HCT116 (cell line): ENCODE measurements at regions of chr18 and their contacts with region 1.

Region 1: DNA sequence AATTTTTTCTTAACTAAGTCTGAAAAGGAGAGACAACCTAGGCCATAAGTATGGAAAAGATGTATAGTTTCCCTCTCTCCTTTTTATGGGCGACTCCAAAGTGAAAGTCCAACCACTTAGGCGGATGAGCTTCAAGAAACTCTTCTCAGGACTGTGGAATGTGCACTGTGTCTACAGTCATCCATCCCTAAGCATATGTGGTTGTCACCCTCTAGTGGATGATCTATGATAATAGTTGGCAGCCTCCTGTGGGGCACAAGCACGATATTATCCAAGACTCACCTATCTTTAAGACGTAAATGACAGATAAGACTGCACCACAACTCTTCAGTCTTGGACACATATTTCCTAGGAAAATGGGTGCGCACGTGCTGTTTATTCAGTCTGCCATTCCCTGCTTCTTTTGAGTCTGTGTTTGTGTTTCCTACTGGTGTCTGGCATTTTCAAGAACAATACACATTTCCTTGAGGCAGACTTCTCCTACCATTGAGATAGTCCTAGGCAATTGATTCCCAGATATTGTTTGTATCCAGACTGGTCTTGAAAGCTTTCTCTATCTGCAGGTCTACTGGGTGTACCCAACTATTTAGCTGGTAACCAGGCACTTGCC is 145.5 kb upstream of the CTAGE1 start:
- DNase-seq: peak; percentile 74
- ATAC-seq: peak; percentile 81
- H3K4me3 ChIP-seq: peak overlapping the region; percentile 1 to 4; a peak in 3 of 4 replicates
- H3K27ac ChIP-seq: no peak overlapping the region
- H3K4me1 ChIP-seq: peaks cover 4 to 22% of the 10 kb centered on the region in 2 experiments; a peak in 3 of 4 replicates
- H3K27me3 ChIP-seq: no peaks in the 10 kb centered on the region
- CTCF ChIP-seq: peak; percentile 76 to 82 (median 81)
- POLR2A ChIP-seq: no peak
- RAD21 ChIP-seq: peak; percentile 97

Region 2: DNA sequence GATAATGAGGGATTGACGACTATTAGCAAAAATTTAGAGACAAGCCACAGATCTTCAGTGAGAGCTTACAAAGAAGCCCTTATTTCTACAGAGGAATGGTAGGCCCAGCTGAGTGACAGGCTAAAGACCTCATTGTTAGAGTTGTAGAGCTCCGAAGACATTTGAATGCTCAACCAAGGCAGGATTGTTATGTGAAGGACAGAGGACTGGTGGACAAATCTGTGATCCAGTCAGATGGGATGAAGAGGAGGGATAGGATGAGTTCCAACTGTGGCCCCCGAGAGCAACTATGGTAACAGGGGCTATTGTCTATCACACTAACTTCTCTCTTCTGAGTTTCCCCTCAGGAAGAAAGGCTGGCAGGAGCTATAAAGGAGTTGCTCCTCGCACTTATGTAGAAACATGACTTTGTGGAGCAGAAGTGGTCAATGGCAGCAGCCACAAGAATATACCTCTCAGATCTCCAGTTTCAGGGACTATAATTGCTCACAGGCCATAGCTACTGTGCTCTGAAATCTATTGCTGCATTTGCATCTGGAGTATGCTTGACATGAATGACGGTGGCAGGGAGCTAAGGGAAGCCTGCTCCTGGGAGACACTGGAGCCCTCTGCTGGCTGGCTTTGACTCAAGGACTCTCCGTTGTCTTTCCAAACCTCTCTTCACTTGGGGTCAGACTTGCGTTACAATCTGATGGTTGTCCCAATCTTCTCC is 1371.5 kb before region 1 on chr18:
- CTCF ChIA-PET with region 1: no interaction called
- POLR2A ChIA-PET with region 1: no interaction called
- RAD21 ChIA-PET with region 1: no interaction called
- intact Hi-C with region 1: loop called (anchors 10 kb)
- DNase-seq: peak; percentile 57
- ATAC-seq: peak; percentile 92
- H3K4me3 ChIP-seq: no peak overlapping the region
- H3K27ac ChIP-seq: no peak overlapping the region
- H3K4me1 ChIP-seq: peaks cover 0 to 16% of the 10 kb centered on the region in 2 experiments; a peak in 2 of 4 replicates
- H3K27me3 ChIP-seq: no peaks in the 10 kb centered on the region
- CTCF ChIP-seq: peak; percentile 72 to 91 (median 77)
- POLR2A ChIP-seq: no peak
- RAD21 ChIP-seq: peak; percentile 71

Region 3: DNA sequence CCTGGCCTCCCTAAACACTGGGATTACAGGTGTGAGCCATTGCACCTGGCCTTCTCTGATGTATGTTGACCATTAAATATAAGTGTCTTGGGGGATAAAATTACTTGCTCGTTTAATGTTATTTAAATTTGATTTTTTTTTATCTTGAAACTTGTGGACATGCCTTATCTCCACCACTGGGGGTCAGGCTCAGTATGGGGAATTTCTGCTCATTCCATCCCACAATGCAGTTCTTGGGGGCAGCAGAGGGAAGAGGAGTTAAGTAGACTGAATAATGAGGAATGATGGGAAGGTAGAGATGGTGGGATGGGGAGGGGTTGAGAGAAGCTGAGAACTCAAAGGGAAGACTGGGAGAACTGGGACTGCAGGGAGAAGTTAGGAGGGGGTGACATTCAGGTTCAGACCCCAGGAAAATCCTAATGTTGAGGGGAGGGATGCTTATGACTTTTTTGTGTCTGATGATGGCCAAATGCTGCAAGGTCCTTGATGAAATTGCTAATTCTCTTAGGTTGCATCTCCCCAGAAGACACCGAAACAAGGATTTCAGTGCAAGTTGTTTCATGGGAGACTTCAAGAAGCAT is 648.4 kb before region 1 on chr18:
- CTCF ChIA-PET with region 1: no interaction called
- POLR2A ChIA-PET with region 1: no interaction called
- RAD21 ChIA-PET with region 1: no interaction called
- intact Hi-C with region 1: loop called (anchors 1 kb)
- DNase-seq: peak; percentile 59
- ATAC-seq: peak; percentile 95
- H3K4me3 ChIP-seq: no peak overlapping the region
- H3K27ac ChIP-seq: no peak overlapping the region
- H3K4me1 ChIP-seq: no peaks in the 10 kb centered on the region
- H3K27me3 ChIP-seq: no peaks in the 10 kb centered on the region
- CTCF ChIP-seq: peak; percentile 67 to 92 (median 80)
- POLR2A ChIP-seq: no peak
- RAD21 ChIP-seq: peak; percentile 90

Region 4: DNA sequence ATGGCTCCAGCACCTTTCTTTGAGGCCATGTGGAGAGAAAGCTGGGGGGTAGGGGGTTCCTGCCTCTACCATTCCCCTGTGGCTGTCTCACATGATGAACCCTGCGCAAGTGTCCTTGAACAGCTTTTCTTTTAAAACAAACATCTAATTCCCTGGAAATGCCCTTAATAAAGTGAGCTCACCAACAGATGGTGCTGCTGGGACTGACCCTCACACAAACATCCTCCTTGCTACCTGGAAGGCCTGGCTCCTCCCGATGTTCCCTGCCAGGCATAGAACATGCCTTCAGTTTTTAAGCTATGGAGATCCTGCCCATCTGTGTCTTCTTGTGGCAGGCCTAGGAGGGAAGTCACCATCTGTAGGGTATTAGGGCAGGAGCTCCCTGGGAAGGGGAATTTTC is 454.5 kb before region 1 on chr18:
- CTCF ChIA-PET with region 1: interaction called, 9 read pairs
- POLR2A ChIA-PET with region 1: no interaction called
- RAD21 ChIA-PET with region 1: no interaction called
- intact Hi-C with region 1: loop called (anchors 2 kb)
- DNase-seq: peak; percentile 7
- ATAC-seq: peak; percentile 78
- H3K4me3 ChIP-seq: no peak overlapping the region
- H3K27ac ChIP-seq: no peak overlapping the region
- H3K4me1 ChIP-seq: peaks cover 5 to 20% of the 10 kb centered on the region in 2 experiments; a peak in 3 of 4 replicates
- H3K27me3 ChIP-seq: no peaks in the 10 kb centered on the region
- CTCF ChIP-seq: peak in 2 of 3 experiments; percentile 35 to 36; a peak in 3 of 6 replicates
- POLR2A ChIP-seq: no peak
- RAD21 ChIP-seq: peak; percentile 46

Region 5: GRCh38 chr18:22223254-22223960 is 339.8 kb before region 1 on chr18:
- CTCF ChIA-PET with region 1: interaction called, 7 read pairs
- POLR2A ChIA-PET with region 1: no interaction called
- RAD21 ChIA-PET with region 1: interaction called in 1 of 2 experiments, 3 read pairs
- intact Hi-C with region 1: loop called (anchors 1 kb)
- DNase-seq: peak; percentile 69
- ATAC-seq: peak; percentile 100
- H3K4me3 ChIP-seq: no peak overlapping the region
- H3K27ac ChIP-seq: no peak overlapping the region
- H3K4me1 ChIP-seq: peaks cover 10 to 13% of the 10 kb centered on the region in 2 experiments; a peak in 3 of 4 replicates
- H3K27me3 ChIP-seq: no peaks in the 10 kb centered on the region
- CTCF ChIP-seq: no peak
- POLR2A ChIP-seq: no peak
- RAD21 ChIP-seq: 0 out of 2 replicates have a peak, but pooled peaks have one; percentile 18